Upper lobe of right lung (tissue), 1 donor: ENCODE measurements at regions of chr12 and their contacts with region 1.

Region 1: DNA sequence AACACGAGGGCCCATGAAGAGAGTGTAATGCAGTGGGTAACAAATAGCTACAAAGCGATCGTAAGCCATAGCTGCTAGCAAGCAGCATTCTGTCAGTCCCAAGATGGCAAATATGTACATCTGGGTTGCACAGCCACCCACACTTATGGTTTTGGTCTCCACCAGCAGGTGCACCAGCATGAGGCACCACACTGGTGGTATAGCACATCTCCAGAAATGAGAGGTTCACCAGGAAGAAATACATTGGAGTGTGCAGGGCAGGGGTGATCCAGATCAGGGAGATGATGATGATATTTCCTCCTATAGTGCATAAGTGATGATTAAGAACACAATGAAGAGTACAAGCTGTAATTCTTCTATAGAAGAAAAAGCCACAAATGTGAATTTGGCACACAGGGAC is 26.4 kb upstream of the OR10A7 start:
- DNase-seq: no peak
- ATAC-seq: no peak
- H3K4me3 ChIP-seq: no peak overlapping the region
- H3K27ac ChIP-seq: no peak overlapping the region
- H3K4me1 ChIP-seq: no peaks in the 10 kb centered on the region
- H3K27me3 ChIP-seq: no peaks in the 10 kb centered on the region
- CTCF ChIP-seq: no peak

Region 2: GRCh38 chr12:55619354-55620138 is 425.2 kb after region 1 on chr12:
- intact Hi-C with region 1: loop called (anchors 10 kb)
- DNase-seq: no peak
- ATAC-seq: peak; percentile 97
- H3K4me3 ChIP-seq: no peak overlapping the region
- H3K27ac ChIP-seq: no peak overlapping the region
- H3K4me1 ChIP-seq: no peaks in the 10 kb centered on the region
- H3K27me3 ChIP-seq: no peaks in the 10 kb centered on the region
- CTCF ChIP-seq: peak; percentile 84